ENCODE measurements at regions of chrX and their contacts with region 1.

Region 1: GRCh38 chrX:119516157-119516702 is 48.0 kb downstream of the SLC25A5 start:
- DNase-seq: peak; percentile 30
- H3K4me3 ChIP-seq: no peak overlapping the region
- H3K27ac ChIP-seq: no peak overlapping the region
- H3K27me3 ChIP-seq: no peaks in the 10 kb centered on the region
- CTCF ChIP-seq: peak; percentile 79

Region 2: DNA sequence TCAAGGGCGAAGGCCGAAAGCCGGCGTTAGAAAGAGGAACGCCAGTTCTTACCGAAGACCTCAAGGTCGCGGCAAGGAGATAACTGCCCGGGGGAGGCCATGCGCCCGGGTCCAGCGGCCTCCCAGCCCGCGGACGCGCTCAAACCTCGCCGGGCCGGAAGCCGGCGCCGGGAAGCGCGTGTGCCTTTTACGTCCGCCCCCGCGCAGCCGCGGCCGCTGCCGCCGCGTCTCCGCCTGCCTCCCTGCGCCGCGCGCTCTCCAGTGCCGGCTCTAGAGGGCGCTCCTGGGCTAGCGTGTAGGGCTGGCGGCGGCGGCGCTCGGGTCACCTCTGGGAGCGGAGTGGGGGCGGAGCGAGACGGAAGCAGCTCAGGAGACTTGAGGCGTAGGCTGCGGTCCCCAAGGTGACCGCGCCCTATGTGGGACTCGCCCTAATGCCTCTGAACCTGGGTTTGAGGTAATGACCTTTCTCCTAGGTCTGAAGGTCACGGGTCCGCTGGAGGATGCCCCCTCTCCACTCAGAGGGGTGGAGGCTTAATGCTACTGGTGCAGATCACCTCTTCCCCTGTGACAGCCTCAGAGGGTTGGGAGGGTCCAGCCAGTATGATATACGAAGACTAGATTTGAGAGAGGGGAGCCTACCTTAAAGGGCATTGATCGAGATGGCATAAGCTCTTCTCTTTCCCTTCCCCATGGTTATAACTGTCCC is 47.1 kb before region 1 on chrX:
- CTCF ChIA-PET with region 1: interaction called, 10 read pairs
- POLR2A ChIA-PET with region 1: no interaction called
- DNase-seq: no peak
- H3K4me3 ChIP-seq: peak overlapping the region; percentile 79
- H3K27ac ChIP-seq: peak overlapping the region; percentile 47
- H3K27me3 ChIP-seq: no peaks in the 10 kb centered on the region
- CTCF ChIP-seq: peak; percentile 50

Region 3: DNA sequence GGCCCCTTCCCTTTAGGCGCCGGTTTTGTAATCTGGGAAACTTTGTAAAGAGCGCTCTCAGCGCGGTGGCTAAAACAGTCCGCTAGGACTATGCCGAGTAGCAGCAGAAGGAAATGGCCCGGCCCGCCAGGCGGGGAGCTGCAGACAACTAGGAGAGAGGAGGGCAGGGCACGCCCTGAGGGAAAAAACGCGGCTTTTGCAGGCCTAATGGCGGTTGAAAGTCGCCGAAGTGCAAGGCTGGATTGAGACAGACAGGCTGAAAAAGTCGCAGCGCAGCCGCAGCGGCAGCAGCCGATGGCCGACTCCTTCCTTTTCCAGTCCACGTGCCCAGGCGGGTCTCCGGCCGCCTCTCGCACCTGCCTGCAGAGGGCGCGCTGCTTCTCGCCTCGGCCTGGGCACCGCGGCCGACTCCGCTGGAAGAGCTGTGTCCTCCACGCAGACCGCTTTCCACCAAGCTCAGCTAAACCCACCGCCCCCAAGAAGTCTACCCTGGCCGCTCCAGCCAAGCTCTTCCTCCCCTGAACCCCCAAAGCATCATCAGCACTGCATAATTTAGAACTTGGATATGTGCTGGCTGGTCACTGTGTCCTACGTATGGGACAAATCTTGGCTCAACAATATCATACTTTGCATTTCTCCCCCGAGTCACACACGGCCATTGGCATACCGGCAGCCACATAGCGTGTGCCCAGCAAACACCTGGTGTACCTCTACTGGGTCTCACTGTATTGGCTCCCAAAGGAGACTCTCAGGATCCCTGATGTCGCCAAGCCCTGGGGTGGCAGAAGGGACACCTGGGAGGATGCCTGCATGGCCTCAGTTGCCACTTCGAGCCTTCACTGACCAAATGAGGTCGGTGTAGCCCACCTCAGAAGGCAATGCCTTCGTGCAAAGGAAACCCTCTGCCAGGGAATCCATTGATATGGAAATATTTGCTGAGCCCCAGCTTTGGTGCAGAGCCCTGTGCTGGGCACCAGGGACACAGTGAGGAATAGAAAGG is 33.4 kb before region 1 on chrX:
- CTCF ChIA-PET with region 1: interaction called, 62 read pairs
- POLR2A ChIA-PET with region 1: interaction called, 3 read pairs
- DNase-seq: no peak
- H3K4me3 ChIP-seq: peak overlapping the region; percentile 48
- H3K27ac ChIP-seq: no peak overlapping the region
- H3K27me3 ChIP-seq: no peaks in the 10 kb centered on the region
- CTCF ChIP-seq: peak; percentile 60

Region 4: GRCh38 chrX:119488749-119489148 is 27.5 kb before region 1 on chrX:
- CTCF ChIA-PET with region 1: interaction called, 62 read pairs
- POLR2A ChIA-PET with region 1: no interaction called
- DNase-seq: no peak
- H3K4me3 ChIP-seq: no peak overlapping the region
- H3K27ac ChIP-seq: no peak overlapping the region
- H3K27me3 ChIP-seq: no peaks in the 10 kb centered on the region
- CTCF ChIP-seq: peak; percentile 59

Region 5: DNA sequence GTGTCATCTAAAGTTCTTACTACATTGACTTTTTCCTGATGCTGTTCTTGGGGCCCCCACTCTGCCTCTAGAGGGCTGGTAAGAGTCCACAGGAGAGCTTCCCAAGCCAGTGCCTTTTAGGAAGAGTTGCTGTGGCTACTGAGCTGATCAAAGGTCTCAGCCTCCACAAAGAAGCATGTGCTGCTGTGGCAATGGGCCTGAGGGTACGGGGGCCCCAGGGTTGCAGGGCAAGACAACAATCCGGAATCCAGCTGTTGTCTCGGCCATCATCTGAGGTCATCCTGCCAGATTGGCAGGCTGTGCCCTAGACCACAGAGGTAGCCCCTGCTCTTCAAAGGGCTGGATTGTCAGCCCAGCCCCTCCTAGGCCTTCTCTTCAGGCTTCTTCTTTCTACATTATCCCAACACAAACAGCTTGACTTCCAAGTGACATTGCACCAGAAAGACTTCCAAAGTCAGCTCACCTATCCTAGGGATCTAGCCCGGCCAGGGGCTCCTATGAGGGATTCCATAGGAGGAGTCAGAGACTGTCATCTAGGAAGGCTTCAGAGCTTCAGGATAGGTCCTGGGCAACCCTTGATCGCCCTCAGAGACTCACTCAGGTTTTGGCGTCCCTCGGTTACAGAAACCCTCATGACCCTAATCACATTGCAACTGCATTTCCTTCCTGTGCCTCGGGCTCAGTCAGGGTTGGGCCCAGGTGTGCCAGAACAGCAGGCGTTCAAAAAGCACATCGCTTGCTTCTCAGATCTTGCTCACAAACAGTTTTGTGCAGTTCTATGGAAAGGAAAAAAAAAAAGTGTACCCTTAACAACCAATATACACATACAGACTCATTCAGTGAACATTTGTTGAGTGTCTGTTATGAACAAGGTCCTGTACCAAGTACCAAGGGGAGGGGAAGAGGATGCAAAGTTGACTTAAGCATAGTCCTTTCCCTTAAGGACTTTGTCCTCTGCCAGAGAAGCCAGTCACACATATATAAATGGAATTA is 20.2 kb before region 1 on chrX:
- CTCF ChIA-PET with region 1: interaction called, 62 read pairs
- POLR2A ChIA-PET with region 1: no interaction called
- DNase-seq: no peak
- H3K4me3 ChIP-seq: no peak overlapping the region
- H3K27ac ChIP-seq: no peak overlapping the region
- H3K27me3 ChIP-seq: no peaks in the 10 kb centered on the region
- CTCF ChIP-seq: no peak

Region 6: DNA sequence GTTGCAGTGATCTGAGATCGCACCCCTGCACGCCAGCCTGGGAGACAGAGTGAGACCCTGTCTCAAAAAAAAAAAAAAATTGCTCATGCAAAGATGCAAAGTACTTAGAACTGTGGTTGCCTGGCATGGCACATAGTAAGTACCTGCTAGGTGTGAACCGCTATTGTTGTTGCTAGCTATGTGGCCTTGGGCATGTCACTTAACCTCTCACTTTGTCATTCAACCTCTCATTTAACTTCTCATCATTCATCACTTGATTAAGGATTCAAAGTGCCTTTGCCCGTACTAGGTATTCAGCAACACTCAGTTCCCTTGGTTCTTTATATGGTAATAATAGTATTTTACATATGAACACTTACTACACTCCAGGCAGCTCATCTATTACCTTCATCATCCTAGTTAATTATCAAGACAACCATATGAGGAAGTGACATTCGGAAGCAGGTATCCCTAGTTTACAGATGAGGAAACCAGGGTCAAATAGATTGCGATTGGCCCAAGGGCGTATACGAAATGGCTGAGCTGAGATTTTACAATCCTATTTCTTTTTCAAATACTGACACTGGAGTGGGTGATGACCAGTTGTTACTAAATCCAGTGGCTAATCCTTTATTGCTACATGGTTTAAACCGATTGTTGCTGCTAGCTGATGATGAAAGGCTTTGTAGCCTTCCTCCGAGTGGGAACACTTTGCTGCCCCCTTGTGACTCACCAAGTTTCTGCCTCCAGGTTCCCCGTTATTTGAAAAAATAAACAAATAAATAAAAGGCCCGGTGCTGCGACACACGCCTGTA is 213.4 kb after region 1 on chrX:
- CTCF ChIA-PET with region 1: interaction called, 25 read pairs
- POLR2A ChIA-PET with region 1: no interaction called
- DNase-seq: peak; percentile 24
- H3K4me3 ChIP-seq: no peak overlapping the region
- H3K27ac ChIP-seq: no peak overlapping the region
- H3K27me3 ChIP-seq: no peaks in the 10 kb centered on the region
- CTCF ChIP-seq: peak; percentile 64